CD4-positive, alpha-beta memory T cell (primary cell): ENCODE measurements at regions of chr1 and their contacts with region 1.

Region 1: GRCh38 chr1:114346480-114347029 is 164.4 kb downstream of the TRIM33 start:
- DNase-seq: peak; percentile 93 to 99 (median 97)
- H3K4me3 ChIP-seq: peak overlapping the region; percentile 54 to 71
- H3K4me3 Mint-ChIP-seq: peak overlapping the region; percentile 86 to 98 (median 94)
- H3K27ac ChIP-seq: no peak overlapping the region
- H3K27ac Mint-ChIP-seq: peak overlapping the region; percentile 81 to 98 (median 97)
- H3K4me1 ChIP-seq: peaks cover 46% of the 10 kb centered on the region
- H3K4me1 Mint-ChIP-seq: peaks cover 19 to 49% (median 35%) of the 10 kb centered on the region in 4 donors
- H3K27me3 ChIP-seq: no peaks in the 10 kb centered on the region
- H3K27me3 Mint-ChIP-seq: no peaks in the 10 kb centered on the region

Region 2: GRCh38 chr1:113534130-113534817 is 812.3 kb before region 1 on chr1:
- CTCF ChIA-PET with region 1: no interaction called
- POLR2A ChIA-PET with region 1: no interaction called
- intact Hi-C with region 1: no loop called
- DNase-seq: no peak
- H3K4me3 ChIP-seq: no peak overlapping the region
- H3K4me3 Mint-ChIP-seq: no peak overlapping the region
- H3K27ac ChIP-seq: no peak overlapping the region
- H3K27ac Mint-ChIP-seq: no peak overlapping the region
- H3K4me1 ChIP-seq: no peaks in the 10 kb centered on the region
- H3K4me1 Mint-ChIP-seq: no peaks in the 10 kb centered on the region
- H3K27me3 ChIP-seq: no peaks in the 10 kb centered on the region
- H3K27me3 Mint-ChIP-seq: no peaks in the 10 kb centered on the region

Region 3: DNA sequence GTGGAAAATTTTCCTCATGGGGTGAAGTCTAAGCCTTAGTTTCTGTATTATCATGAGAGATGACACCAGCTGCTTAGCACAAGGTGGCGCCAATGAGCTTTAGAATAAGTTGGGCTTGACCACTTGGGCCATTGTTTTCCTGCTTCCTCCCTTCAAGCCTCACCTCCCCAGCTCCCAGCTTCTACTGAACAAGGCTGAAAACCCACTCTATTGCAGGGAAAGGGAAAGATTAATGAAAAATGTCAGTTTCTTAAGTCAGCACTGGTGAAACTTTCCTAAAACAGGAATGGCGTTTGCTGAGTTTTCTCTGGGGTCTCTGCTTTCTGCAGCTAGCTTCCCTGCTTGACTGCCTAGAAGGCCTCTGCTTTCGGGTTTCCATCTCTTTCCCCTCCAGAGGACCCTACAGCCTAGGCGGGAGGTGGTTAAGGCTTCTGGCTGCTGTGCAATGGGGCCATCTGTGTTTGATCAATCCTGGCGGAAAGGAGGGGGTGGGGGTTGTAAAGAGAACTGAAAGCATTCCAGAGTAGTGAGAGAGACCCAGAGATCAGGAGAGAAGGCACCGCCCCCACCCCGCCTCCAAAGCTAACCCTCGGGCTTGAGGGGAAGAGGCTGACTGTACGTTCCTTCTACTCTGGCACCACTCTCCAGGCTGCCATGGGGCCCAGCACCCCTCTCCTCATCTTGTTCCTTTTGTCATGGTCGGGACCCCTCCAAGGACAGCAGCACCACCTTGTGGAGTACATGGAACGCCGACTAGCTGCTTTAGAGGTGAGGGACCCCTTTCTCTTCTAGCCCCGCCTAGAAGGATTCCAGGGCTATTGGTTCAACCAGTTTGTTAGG is 367.5 kb before region 1 on chr1 and contains the start of gene OLFML3:
- CTCF ChIA-PET with region 1: interaction called, 4 read pairs
- POLR2A ChIA-PET with region 1: no interaction called
- intact Hi-C with region 1: loop called (anchors 5 kb)
- DNase-seq: peak in 3 of 5 donors; percentile 17 to 27 (median 22)
- H3K4me3 ChIP-seq: no peak within 1 kb of the TSS
- H3K4me3 Mint-ChIP-seq: peak within 1 kb of the TSS in 1 of 8 donors; percentile 17
- H3K27ac ChIP-seq: no peak within 1 kb of the TSS
- H3K27ac Mint-ChIP-seq: peak within 1 kb of the TSS in 5 of 7 donors; percentile 30 to 67 (median 50)
- H3K4me1 ChIP-seq: no peaks in the 10 kb centered on the region
- H3K4me1 Mint-ChIP-seq: peaks cover 11 to 41% (median 27%) of the 10 kb centered on the region in 4 donors
- H3K27me3 ChIP-seq: no peaks in the 10 kb centered on the region
- H3K27me3 Mint-ChIP-seq: no peaks in the 10 kb centered on the region
- total RNA-seq, gene OLFML3: 0.42 to 0.70 TPM

Region 4: GRCh38 chr1:114389714-114390113 is 43.2 kb after region 1 on chr1:
- CTCF ChIA-PET with region 1: no interaction called
- POLR2A ChIA-PET with region 1: no interaction called
- intact Hi-C with region 1: loop called (anchors 5 kb)
- DNase-seq: no peak
- H3K4me3 ChIP-seq: no peak overlapping the region
- H3K4me3 Mint-ChIP-seq: no peak overlapping the region
- H3K27ac ChIP-seq: no peak overlapping the region
- H3K27ac Mint-ChIP-seq: no peak overlapping the region
- H3K4me1 ChIP-seq: no peaks in the 10 kb centered on the region
- H3K4me1 Mint-ChIP-seq: no peaks in the 10 kb centered on the region
- H3K27me3 ChIP-seq: no peaks in the 10 kb centered on the region
- H3K27me3 Mint-ChIP-seq: no peaks in the 10 kb centered on the region

Region 5: GRCh38 chr1:114558544-114558943 is 212.0 kb after region 1 on chr1:
- CTCF ChIA-PET with region 1: interaction called, 11 read pairs
- POLR2A ChIA-PET with region 1: no interaction called
- intact Hi-C with region 1: loop called (anchors 1 kb)
- DNase-seq: peak in 4 of 5 donors; percentile 18 to 28 (median 20)
- H3K4me3 ChIP-seq: no peak overlapping the region
- H3K4me3 Mint-ChIP-seq: no peak overlapping the region
- H3K27ac ChIP-seq: no peak overlapping the region
- H3K27ac Mint-ChIP-seq: no peak overlapping the region
- H3K4me1 ChIP-seq: no peaks in the 10 kb centered on the region
- H3K4me1 Mint-ChIP-seq: no peaks in the 10 kb centered on the region
- H3K27me3 ChIP-seq: no peaks in the 10 kb centered on the region
- H3K27me3 Mint-ChIP-seq: no peaks in the 10 kb centered on the region

Region 6: DNA sequence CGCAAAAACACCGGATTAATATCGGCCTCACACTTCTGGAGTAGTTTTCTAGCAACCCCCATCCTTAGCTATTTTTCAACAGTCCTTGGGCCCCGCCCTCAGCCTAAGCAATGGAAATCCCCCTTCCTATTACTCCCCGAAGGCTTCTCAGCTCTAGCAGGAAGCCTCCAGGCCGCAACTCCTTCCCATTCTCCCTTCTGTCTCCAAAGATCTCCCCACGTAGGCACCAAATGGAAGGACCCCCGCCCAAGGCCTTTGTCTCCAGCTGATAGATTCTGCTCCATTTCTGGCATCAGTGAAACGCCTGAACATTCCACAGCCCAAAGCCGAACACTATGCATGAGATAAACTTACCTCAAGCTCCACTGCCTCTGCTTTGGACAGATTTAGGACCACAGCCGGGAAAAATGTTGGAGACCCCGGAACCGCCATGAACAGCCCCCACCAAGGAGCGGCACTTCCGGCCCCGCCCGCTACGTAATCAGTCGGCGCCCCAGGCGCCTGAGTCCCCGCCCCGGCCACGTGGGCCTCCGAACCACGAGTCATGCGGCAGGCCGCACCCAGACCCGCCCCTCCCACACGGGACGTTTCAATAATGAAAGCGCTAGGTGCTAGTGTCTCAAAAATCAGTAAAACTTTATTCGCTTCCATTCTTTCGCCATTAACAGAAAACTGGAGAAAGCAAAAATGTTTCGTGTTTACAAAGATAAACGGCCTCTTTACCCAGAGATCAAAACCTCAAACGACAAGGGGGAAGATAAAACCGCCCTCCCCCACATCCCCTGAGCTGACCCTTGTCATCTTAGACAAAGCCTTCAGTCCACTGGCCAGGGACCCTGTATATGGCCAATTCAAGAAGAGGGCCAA is 370.0 kb after region 1 on chr1 and contains the start of gene NRAS:
- CTCF ChIA-PET with region 1: interaction called, 4 read pairs
- POLR2A ChIA-PET with region 1: interaction called, 4 read pairs
- intact Hi-C with region 1: loop called (anchors 1 kb)
- DNase-seq: peak; percentile 93 to 96 (median 94)
- H3K4me3 ChIP-seq: peak within 1 kb of the TSS; percentile 83 to 90
- H3K4me3 Mint-ChIP-seq: peak within 1 kb of the TSS; percentile 94 to 99 (median 98)
- H3K27ac ChIP-seq: peak within 1 kb of the TSS; percentile 97
- H3K27ac Mint-ChIP-seq: peak within 1 kb of the TSS; percentile 99 to 100 (median 100)
- H3K4me1 ChIP-seq: peaks cover 21% of the 10 kb centered on the region
- H3K4me1 Mint-ChIP-seq: peaks cover 10 to 25% (median 19%) of the 10 kb centered on the region in 4 donors
- H3K27me3 ChIP-seq: no peaks in the 10 kb centered on the region
- H3K27me3 Mint-ChIP-seq: no peaks in the 10 kb centered on the region
- total RNA-seq, gene NRAS: 22.0 to 22.3 TPM

Region 7: DNA sequence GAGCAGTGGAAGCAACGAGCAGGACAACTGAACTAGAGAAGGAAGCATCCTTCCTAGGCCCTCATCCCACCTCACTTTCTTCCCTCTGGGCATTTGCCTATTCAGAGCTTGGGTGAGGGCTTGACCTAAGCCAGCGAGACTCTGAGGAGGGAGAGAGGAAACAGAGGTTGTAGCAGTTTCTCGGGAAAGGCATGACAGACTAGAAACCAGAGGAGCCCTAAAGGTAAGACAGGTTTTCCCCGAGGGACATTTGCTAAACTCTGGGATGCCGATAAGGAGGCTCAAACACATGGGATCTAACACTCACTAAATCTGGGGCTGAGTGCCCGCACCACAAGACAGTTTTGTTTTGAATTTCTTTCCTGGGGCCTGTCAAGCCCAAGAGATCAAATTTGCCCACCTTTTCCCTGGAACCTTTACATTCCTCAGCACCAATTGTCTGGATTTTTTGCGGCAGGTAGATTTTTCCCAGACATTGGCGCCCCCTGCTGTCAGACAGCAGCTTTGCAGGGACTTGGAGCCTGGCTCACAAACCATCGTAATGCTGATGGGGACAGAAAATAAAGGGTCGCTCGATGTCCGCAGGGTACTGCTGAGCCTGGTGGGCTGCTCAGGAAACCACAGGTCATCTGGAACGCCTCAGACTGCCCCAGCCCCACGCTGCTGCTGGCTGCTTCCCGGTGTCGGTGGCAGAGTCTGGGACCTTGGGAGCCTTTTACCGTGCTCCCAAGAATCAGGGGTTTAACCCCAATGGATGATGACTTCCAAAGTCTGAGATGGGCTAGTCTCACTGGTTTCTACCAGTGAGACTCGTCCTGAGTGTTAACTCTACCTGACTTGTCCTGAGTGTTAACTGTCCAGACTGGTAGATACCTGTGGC is 766.2 kb after region 1 on chr1:
- CTCF ChIA-PET with region 1: no interaction called
- POLR2A ChIA-PET with region 1: no interaction called
- intact Hi-C with region 1: loop called (anchors 10 kb)
- DNase-seq: peak in 4 of 5 donors; percentile 39 to 60 (median 46)
- H3K4me3 ChIP-seq: no peak overlapping the region
- H3K4me3 Mint-ChIP-seq: no peak overlapping the region
- H3K27ac ChIP-seq: no peak overlapping the region
- H3K27ac Mint-ChIP-seq: peak overlapping the region in 6 of 7 donors; percentile 12 to 69 (median 46)
- H3K4me1 ChIP-seq: peaks cover 18% of the 10 kb centered on the region
- H3K4me1 Mint-ChIP-seq: peaks cover 9 to 25% (median 18%) of the 10 kb centered on the region in 4 donors
- H3K27me3 ChIP-seq: no peaks in the 10 kb centered on the region
- H3K27me3 Mint-ChIP-seq: no peaks in the 10 kb centered on the region